Activated CD4-positive, alpha-beta memory T cell treated with anti-CD3 and anti-CD28 coated beads for 36 hours (primary cell): ENCODE measurements at regions of chr22 and their contacts with region 1.

Region 1: GRCh38 chr22:46367707-46368191 is 32.2 kb downstream of the TRMU start:
- DNase-seq: peak; percentile 78
- H3K4me3 Mint-ChIP-seq: no peak overlapping the region
- H3K27ac Mint-ChIP-seq: no peak overlapping the region
- H3K4me1 Mint-ChIP-seq: peaks cover 12% of the 10 kb centered on the region
- H3K27me3 Mint-ChIP-seq: peaks cover 4% of the 10 kb centered on the region

Region 2: DNA sequence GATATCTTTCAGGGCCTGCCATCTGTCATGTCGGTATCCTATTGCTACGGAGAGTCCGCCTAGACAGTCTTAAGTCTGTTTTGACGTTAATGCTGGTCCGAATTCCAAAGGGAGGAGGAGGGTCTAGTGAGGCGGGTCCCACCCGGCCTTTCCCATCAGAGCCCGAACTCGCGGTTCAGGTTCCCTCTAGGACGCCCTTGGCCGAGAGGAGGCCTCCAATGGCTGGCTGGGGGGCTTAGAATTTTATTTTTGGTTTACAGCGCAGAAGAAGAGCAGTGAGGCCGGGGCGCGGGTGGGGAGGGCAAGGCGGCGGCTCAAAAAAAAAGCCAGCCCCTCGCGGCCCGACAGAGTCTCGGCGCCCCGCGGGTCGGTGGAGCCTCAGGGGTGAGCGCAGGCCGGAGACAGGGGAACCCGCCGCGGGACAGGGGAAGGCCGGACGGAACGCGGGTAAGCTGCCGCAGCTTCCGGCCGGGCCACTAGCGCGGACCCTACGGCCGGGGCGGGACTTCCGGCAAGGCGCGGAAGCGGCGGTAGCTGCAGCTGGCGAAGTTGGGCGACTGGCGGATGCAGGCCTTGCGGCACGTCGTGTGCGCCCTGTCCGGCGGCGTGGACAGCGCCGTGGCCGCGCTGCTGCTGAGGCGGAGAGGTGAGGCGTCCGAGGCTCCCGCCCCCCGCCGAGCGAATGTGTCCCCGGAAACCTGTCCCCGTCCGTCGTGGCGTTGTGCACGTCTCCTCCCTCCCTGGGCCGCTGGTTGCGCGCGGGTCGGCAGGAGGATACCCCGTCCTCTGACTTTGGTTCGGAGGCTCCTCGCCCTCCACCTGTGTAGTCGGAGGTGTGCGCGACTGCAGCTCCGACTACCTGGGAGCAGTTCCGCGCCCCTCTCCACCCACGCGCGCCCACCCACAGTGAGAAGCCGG is 32.3 kb before region 1 on chr22 and contains the start of gene TRMU:
- CTCF ChIA-PET with region 1: interaction called, 19 read pairs
- POLR2A ChIA-PET with region 1: no interaction called
- intact Hi-C with region 1: no loop called
- DNase-seq: peak; percentile 82
- H3K4me3 Mint-ChIP-seq: peak within 1 kb of the TSS; percentile 98
- H3K27ac Mint-ChIP-seq: peak within 1 kb of the TSS; percentile 86
- H3K4me1 Mint-ChIP-seq: peaks cover 37% of the 10 kb centered on the region
- H3K27me3 Mint-ChIP-seq: no peaks in the 10 kb centered on the region
- total RNA-seq, gene TRMU: 61.3 to 63.2 TPM

Region 3: DNA sequence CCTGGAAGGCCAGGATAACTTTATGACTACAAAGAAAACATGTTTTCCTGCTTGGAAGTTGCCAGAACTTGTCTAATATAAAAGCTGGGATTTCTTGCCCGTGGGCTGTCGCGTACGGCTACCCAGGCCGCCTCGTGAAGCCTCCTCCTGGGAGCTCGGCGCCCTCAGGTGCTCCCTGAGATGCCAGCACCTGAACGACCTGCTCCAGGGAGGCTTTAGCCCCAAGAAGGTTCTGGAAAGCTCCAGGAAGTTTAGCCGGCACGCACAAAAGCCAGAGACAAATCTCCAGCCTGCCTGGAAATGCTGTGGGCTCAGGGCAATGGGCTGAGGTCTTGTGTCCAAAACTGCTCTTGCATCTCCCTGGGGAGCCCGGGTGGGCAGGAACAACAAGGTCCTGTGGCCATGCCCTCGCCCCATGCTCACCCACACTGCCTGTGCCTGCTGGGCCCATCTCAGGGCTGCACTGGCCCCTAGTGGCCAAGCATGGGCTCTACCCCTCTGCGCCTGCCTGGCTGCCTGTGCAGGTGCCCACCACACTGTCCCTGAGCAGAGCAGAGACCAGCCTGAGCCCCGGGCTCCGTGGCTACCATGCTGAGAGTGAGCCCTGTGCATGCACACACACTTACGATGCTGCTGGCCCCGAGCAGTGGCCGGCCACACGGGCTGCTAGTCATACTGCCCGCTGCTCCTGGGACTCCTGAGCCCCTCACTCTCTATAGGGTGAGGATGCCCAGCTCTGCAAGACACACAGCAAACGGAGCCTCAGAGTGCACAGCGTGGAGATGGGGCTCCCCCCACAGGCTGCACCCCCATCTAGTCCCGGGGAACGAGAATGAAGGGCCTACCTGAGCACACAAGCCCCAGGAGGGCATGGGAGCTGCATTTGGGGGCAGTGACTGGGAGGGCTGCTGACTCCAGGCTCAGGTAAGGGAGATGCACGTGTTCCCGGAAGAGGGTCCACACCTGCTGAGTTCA is 174.5 kb after region 1 on chr22:
- CTCF ChIA-PET with region 1: interaction called, 111 read pairs
- POLR2A ChIA-PET with region 1: no interaction called
- intact Hi-C with region 1: loop called (anchors 1 kb)
- DNase-seq: peak; percentile 81
- H3K4me3 Mint-ChIP-seq: no peak overlapping the region
- H3K27ac Mint-ChIP-seq: no peak overlapping the region
- H3K4me1 Mint-ChIP-seq: peaks cover 14% of the 10 kb centered on the region
- H3K27me3 Mint-ChIP-seq: peaks cover 33% of the 10 kb centered on the region